Gastrocnemius medialis (tissue), 4 donors: ENCODE measurements at regions of chr22 and their contacts with region 1.

Region 1: GRCh38 chr22:38733329-38733723 is 22.5 kb downstream of the SUN2 start:
- DNase-seq: no peak
- ATAC-seq: peak; percentile 18 to 22
- H3K4me3 ChIP-seq: no peak overlapping the region
- H3K27ac ChIP-seq: peak overlapping the region; percentile 83 to 92 (median 88)
- H3K4me1 ChIP-seq: peaks cover 38% of the 10 kb centered on the region in 2 donors
- H3K27me3 ChIP-seq: no peaks in the 10 kb centered on the region
- CTCF ChIP-seq: peak; percentile 62 to 86 (median 71)
- POLR2A ChIP-seq: no peak

Region 2: GRCh38 chr22:38506118-38506962 is 227.0 kb before region 1 on chr22 and contains the start of gene DDX17:
- in situ Hi-C with region 1: no loop called
- intact Hi-C with region 1: loop called (anchors 10 kb)
- DNase-seq: peak; percentile 91 to 94
- ATAC-seq: peak; percentile 91 to 92
- H3K4me3 ChIP-seq: peak within 1 kb of the TSS; percentile 72 to 95 (median 85)
- H3K27ac ChIP-seq: peak within 1 kb of the TSS; percentile 94 to 100 (median 98)
- H3K4me1 ChIP-seq: peaks cover 34 to 36% of the 10 kb centered on the region in 2 donors
- H3K27me3 ChIP-seq: no peaks in the 10 kb centered on the region
- CTCF ChIP-seq: no peak
- POLR2A ChIP-seq: peak; percentile 53 to 84
- total RNA-seq, gene DDX17: 108 to 329 (median 206) TPM

Region 3: GRCh38 chr22:38718414-38718813 is 14.9 kb before region 1 on chr22:
- in situ Hi-C with region 1: no loop called
- intact Hi-C with region 1: loop called (anchors 2 kb)
- DNase-seq: peak; percentile 55 to 83
- ATAC-seq: peak; percentile 94 to 97
- H3K4me3 ChIP-seq: no peak overlapping the region
- H3K27ac ChIP-seq: peak overlapping the region; percentile 54 to 58 (median 56)
- H3K4me1 ChIP-seq: peaks cover 17 to 21% of the 10 kb centered on the region in 2 donors
- H3K27me3 ChIP-seq: no peaks in the 10 kb centered on the region
- CTCF ChIP-seq: peak; percentile 56 to 74 (median 71)
- POLR2A ChIP-seq: no peak

Region 4: GRCh38 chr22:38755911-38756532 is 22.7 kb after region 1 on chr22 and contains the start of gene SUN2:
- in situ Hi-C with region 1: no loop called
- intact Hi-C with region 1: loop called (anchors 1 kb)
- DNase-seq: peak; percentile 89 to 94
- ATAC-seq: peak; percentile 76 to 81
- H3K4me3 ChIP-seq: peak within 1 kb of the TSS; percentile 55 to 93 (median 74)
- H3K27ac ChIP-seq: peak within 1 kb of the TSS; percentile 93 to 100 (median 96)
- H3K4me1 ChIP-seq: peaks cover 34 to 38% of the 10 kb centered on the region in 2 donors
- H3K27me3 ChIP-seq: no peaks in the 10 kb centered on the region
- CTCF ChIP-seq: no peak
- POLR2A ChIP-seq: peak; percentile 89 to 94
- total RNA-seq, gene SUN2: 177 to 423 (median 312) TPM

Region 5: DNA sequence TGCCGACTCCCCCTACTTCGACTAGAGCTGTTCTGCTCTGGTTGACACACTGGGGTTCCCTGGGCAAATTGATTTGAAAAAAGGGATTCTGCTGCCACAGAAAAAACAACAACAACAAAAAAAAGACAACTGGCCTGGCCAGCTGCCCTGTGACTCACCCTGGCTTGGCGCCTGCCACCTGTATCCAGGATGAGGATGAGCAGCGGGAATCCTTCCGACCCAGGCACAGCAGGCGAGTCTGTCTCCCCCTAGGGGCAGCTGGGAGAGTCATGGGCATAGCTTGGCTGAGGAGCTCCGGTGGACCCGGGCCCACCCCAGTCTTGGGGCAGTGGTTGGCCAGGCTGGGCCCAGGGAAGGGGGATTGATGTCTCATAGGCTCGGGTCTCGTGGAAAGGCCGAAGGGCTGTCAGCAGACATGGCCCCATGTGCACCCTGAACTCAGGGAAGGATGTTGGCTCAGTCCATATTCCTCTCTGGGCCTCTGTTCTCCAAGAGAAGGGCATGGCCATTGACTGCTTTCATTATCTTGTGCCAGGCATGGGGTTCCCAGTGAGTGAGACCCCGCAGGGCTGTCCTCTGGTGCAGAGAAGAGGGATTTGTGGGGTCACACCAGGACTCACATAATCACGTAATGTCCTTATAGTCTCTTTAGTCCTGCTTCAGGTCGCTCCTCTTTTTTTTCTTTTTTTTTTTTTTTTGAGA is 32.9 kb after region 1 on chr22:
- in situ Hi-C with region 1: no loop called
- intact Hi-C with region 1: loop called (anchors 1 kb)
- DNase-seq: peak; percentile 68 to 71
- ATAC-seq: peak; percentile 76 to 79
- H3K4me3 ChIP-seq: no peak overlapping the region
- H3K27ac ChIP-seq: no peak overlapping the region
- H3K4me1 ChIP-seq: peaks cover 4 to 11% of the 10 kb centered on the region in 2 donors
- H3K27me3 ChIP-seq: peaks cover 0 to 14% (median 8%) of the 10 kb centered on the region in 3 donors
- CTCF ChIP-seq: peak; percentile 58 to 81 (median 75)
- POLR2A ChIP-seq: no peak